ENCODE measurements at regions of chr9 and their contacts with region 1.

Region 1: DNA sequence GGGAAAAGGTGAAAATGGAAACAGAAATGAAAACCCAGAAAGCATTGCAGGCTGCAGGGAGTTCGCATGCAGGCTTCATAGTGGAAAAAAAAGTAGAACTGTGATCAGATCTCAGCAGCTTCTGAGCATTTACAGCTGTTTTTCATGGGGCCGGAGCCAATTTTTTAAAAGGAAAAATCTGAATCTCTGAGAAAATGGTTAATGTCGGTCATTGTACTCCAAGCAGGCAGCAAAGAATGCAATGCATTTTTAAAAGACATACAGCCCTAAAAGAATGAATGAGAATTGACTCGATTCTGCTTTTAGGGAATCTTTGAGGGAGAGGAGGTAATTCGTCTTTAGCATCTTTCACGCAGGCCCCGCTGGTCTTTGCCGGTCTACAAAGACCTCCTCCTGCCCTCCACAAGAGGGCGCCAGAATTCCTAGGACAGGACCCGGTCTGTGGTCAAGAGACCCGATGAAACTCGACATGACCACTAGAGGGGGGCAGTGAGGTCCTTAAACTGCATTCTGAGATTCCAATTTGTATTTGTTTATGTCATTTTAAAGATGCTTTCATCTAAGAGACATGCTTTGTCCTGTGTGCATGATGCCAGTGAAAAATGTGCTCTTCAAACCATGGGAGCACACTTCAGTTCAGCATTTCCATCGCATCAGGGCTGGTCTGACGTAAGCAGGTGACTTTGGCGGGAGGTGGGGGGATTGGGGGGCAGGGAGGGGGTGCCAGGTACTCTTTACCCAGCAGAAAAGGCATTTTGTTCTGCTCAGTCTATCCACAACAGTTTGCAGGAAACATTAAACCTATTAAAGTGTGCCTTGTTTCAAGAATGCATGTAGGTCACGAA is 43.7 kb upstream of the TMEM252 start:
- DNase-seq: peak; percentile 60 to 97 (median 81)

Region 2: GRCh38 chr9:68530618-68531017 is 53.8 kb before region 1 on chr9:
- intact Hi-C with region 1: no loop called
- DNase-seq: no peak

Region 3: DNA sequence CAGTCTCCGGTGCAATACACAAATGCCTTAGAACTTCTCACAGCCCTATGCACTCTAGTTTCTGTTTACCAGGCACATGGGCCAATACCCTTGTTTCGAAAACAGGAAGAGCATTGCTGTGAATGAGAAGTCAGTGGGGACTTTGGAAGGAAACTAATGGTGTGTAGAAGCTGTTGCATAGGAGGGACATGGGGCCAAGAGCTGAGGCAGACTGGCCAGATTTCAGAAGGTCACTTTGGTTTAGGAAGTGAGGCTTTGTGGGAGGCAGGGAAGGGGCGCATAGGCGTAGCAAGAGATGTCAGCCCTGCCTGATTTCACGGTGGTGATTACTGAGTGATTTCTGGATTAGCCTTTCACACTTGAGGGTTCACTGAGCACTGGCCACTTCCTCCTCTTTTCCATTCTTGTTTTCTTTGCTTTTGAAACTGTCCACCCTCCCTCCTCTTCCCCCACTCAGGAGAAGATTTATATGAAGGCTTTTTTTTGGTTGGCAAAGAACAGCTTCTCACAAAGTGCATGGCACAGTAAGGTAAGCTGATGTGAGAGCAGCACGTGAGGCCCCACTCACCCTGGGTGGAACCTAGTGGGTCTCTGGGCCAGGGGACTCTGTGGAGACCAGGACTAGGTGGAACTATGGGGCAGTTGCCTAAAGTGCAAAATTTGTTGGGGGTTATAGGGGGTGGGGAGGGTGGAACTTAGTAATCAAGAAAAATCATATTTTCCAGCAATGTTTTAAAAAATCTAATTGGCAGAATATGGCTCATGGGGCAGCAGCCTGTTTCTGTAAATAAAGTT is 37.6 kb before region 1 on chr9:
- intact Hi-C with region 1: no loop called
- DNase-seq: no peak

Region 4: GRCh38 chr9:68560071-68560844 is 24.2 kb before region 1 on chr9:
- intact Hi-C with region 1: no loop called
- DNase-seq: peak in 1 of 10 donors; percentile 20

Region 5: DNA sequence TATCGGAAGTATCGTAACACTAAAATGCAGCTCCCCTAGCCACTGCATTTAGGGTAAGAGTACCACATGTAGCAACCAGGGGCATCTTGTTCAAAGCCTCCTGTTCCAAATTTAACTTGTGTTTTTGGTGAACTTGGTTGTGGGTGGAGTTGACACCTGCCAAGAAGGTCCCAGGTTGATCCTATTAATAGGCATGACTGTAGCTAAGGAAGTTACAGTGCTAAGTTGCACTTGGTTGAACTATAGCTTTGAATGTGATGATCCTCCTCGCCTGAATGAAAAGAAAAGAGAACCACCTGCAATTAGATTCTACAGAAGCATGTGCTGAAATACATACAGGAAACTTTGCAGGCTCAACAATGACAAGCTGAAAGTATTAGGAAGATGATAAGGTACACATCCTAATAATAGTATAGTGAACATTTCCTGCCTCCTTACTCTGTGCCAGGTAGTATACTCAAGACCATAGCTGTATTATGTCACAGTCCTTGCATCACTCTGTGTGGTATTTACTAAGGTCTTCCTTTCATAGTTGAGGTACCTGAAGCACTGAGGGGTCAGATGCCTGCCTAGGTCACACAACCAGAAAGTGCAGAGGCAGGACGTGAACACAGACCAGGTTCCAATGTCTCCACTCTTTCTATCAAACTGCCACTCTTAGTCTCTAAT is 56.1 kb after region 1 on chr9:
- intact Hi-C with region 1: no loop called
- DNase-seq: no peak

Region 6: GRCh38 chr9:68999393-69000105 is 415.1 kb after region 1 on chr9:
- intact Hi-C with region 1: loop called (anchors 1 kb)
- DNase-seq: peak in 8 of 10 donors; percentile 21 to 87 (median 60)